Posterior vena cava (tissue), 2 donors: ENCODE measurements at regions of chr6 and their contacts with region 1.

Region 1: DNA sequence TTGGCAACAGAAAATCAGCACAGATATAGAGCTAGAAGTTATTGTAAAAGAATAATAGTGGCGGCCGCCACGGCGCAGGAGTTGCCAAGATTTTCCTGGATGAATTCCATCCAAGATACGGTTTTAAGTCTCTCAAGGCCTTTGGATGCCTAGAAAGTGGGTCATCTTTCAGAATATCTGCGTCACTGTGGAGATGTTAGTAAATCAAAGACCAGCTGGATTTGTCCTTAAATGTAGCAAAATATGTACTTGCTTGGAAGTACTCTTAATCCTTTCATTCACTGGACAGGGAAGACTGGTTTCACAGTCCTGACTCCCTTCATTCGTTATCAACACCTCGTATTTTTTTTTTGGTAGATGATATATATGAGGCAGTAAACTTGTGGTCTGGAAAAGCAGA is 83.0 kb downstream of the SLC22A3 start:
- DNase-seq: peak; percentile 84

Region 2: GRCh38 chr6:160137989-160138835 is 293.0 kb before region 1 on chr6:
- intact Hi-C with region 1: loop called in 1 of 2 experiments (anchors 5 kb)
- DNase-seq: no peak

Region 3: DNA sequence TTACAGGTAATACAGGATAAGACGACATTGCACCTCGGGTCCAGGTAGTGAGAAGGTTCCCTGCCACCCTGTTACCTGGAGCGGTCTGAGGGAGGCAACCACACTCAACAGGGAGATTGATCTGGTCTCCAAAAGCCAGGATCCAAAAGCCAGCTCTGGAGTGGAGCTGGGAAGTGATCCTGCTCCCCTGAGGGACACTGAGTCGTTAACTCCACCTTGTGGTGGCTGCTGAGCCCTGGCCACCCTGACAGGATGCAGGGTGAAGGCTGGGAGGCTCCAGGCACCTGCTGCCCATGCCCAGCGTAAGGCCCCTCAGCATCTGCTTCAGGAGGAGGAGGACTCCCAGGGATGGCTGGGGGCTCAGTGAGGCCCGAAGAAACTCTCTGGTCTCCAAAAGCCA is 133.9 kb before region 1 on chr6:
- intact Hi-C with region 1: no loop called
- DNase-seq: no peak

Region 4: GRCh38 chr6:160489091-160489490 is 57.9 kb after region 1 on chr6:
- intact Hi-C with region 1: no loop called
- DNase-seq: no peak